ENCODE measurements at regions of chr5 and their contacts with region 1.

Region 1: GRCh38 chr5:5857396-5857795 is 434.9 kb downstream of the ICE1 start:
- DNase-seq: no peak
- ATAC-seq: no peak
- H3K4me3 ChIP-seq: no peak overlapping the region
- H3K4me3 Mint-ChIP-seq: no peak overlapping the region
- H3K27ac ChIP-seq: no peak overlapping the region
- H3K27ac Mint-ChIP-seq: no peak overlapping the region
- H3K4me1 ChIP-seq: no peaks in the 10 kb centered on the region
- H3K4me1 Mint-ChIP-seq: no peaks in the 10 kb centered on the region
- H3K27me3 ChIP-seq: no peaks in the 10 kb centered on the region
- H3K27me3 Mint-ChIP-seq: peaks cover 0 to 11% (median 3%) of the 10 kb centered on the region in 5 donors

Region 2: GRCh38 chr5:4941957-4942830 is 915.2 kb before region 1 on chr5:
- CTCF ChIA-PET with region 1: no interaction called
- POLR2A ChIA-PET with region 1: no interaction called
- intact Hi-C with region 1: no loop called
- DNase-seq: peak in 1 of 9 donors; percentile 38
- ATAC-seq: peak; percentile 38
- H3K4me3 ChIP-seq: no peak overlapping the region
- H3K4me3 Mint-ChIP-seq: no peak overlapping the region
- H3K27ac ChIP-seq: no peak overlapping the region
- H3K27ac Mint-ChIP-seq: no peak overlapping the region
- H3K4me1 ChIP-seq: no peaks in the 10 kb centered on the region
- H3K4me1 Mint-ChIP-seq: no peaks in the 10 kb centered on the region
- H3K27me3 ChIP-seq: no peaks in the 10 kb centered on the region
- H3K27me3 Mint-ChIP-seq: peaks cover 0 to 12% (median 0%) of the 10 kb centered on the region in 5 donors

Region 3: DNA sequence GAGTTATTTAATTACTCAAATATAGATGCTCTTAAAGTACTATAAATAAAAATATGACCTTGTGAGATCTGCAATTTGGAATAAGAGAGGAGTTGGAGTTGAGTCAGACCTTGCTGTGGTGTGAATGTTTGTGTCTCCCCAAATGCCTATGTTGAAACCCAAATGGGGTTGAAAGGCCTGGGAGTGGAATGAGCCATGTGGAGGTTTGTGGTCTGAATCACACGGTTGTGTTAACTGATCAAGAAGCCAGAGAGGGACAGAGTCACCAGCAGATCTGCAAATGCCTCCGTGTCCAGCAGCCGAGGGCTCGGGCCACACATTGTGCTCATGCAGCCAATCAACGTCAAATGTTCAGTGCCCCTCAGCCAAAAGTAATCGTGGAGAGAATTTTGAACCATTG is 30.5 kb before region 1 on chr5:
- CTCF ChIA-PET with region 1: no interaction called
- POLR2A ChIA-PET with region 1: no interaction called
- intact Hi-C with region 1: no loop called
- DNase-seq: no peak
- ATAC-seq: no peak
- H3K4me3 ChIP-seq: no peak overlapping the region
- H3K4me3 Mint-ChIP-seq: no peak overlapping the region
- H3K27ac ChIP-seq: no peak overlapping the region
- H3K27ac Mint-ChIP-seq: no peak overlapping the region
- H3K4me1 ChIP-seq: no peaks in the 10 kb centered on the region
- H3K4me1 Mint-ChIP-seq: no peaks in the 10 kb centered on the region
- H3K27me3 ChIP-seq: no peaks in the 10 kb centered on the region
- H3K27me3 Mint-ChIP-seq: peaks cover 5 to 27% (median 16%) of the 10 kb centered on the region in 5 donors

Region 4: GRCh38 chr5:5899716-5900115 is 42.3 kb after region 1 on chr5:
- CTCF ChIA-PET with region 1: no interaction called
- POLR2A ChIA-PET with region 1: no interaction called
- intact Hi-C with region 1: loop called in 1 of 2 experiments (anchors 2 kb)
- DNase-seq: no peak
- ATAC-seq: no peak
- H3K4me3 ChIP-seq: no peak overlapping the region
- H3K4me3 Mint-ChIP-seq: no peak overlapping the region
- H3K27ac ChIP-seq: no peak overlapping the region
- H3K27ac Mint-ChIP-seq: no peak overlapping the region
- H3K4me1 ChIP-seq: no peaks in the 10 kb centered on the region
- H3K4me1 Mint-ChIP-seq: no peaks in the 10 kb centered on the region
- H3K27me3 ChIP-seq: no peaks in the 10 kb centered on the region
- H3K27me3 Mint-ChIP-seq: peaks cover 0 to 13% (median 6%) of the 10 kb centered on the region in 5 donors